GM13977 (cell line): ENCODE measurements at regions of chr7 and their contacts with region 1.

Region 1: GRCh38 chr7:56009695-56010094 is 41.5 kb downstream of the PSPH start:
- DNase-seq: no peak
- CTCF ChIP-seq: no peak

Region 2: GRCh38 chr7:55622241-55622640 is 387.5 kb before region 1 on chr7:
- in situ Hi-C with region 1: no loop called
- DNase-seq: no peak
- CTCF ChIP-seq: no peak

Region 3: GRCh38 chr7:56074371-56074791 is 64.7 kb after region 1 on chr7:
- in situ Hi-C with region 1: loop called (anchors 10 kb)
- DNase-seq: peak; percentile 78
- CTCF ChIP-seq: peak; percentile 84

Region 4: DNA sequence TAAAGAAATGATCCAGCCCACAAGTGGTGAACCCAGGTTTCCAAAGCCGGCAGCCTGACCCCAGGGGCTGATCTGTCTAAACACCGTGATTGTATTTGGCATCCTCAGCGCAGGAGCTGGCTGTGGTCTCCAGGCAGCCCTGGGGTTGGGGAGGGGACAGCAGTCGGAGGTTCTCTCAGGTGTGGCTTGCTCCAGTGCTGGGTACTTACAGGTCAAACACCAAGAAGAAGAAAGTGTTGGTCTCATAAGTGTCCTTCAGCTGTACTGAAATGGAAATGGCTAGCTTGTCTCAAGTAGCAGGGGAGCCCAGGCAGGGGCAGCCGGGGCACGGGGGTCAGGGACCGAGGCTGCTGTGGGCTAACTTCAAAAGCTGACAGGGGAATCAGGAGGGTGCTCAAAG is 77.1 kb after region 1 on chr7:
- in situ Hi-C with region 1: no loop called
- DNase-seq: no peak
- CTCF ChIP-seq: no peak